ENCODE measurements at regions of chr2 and their contacts with region 1.

Region 1: DNA sequence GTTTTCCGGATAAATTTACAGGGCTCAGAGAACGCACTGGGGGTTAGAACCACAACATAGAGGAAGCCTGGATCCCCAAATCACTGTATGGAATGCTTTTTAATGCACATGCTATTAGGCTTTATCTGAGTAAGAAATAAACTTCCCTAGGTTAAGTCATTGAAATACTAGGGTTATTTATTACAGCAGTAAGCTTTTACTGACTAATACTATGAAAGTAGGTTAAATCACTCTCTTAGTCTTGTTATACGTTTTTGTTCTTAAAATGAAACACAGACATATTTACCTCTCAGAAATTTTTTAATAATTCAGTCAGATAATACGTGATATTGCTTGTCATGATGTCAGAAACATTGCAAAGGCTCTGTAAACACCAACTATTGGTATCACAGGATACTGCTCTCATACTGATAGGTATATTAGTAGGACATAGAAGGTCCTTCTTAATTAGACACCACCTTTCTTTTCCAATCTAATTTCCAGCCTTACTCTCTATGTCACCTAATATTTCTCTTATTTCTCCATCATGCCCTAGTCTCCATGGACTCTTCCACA is 162.7 kb upstream of the NYAP2 start:
- DNase-seq: no peak
- H3K4me3 ChIP-seq: no peak overlapping the region
- H3K27ac ChIP-seq: no peak overlapping the region
- H3K4me1 ChIP-seq: no peaks in the 10 kb centered on the region
- H3K27me3 ChIP-seq: no peaks in the 10 kb centered on the region
- CTCF ChIP-seq: no peak

Region 2: GRCh38 chr2:224909885-224910573 is 326.8 kb before region 1 on chr2:
- CTCF ChIA-PET with region 1: no interaction called
- POLR2A ChIA-PET with region 1: no interaction called
- intact Hi-C with region 1: no loop called
- DNase-seq: peak in 1 of 2 experiments; percentile 46
- H3K4me3 ChIP-seq: no peak overlapping the region
- H3K27ac ChIP-seq: no peak overlapping the region
- H3K4me1 ChIP-seq: no peaks in the 10 kb centered on the region
- H3K27me3 ChIP-seq: no peaks in the 10 kb centered on the region
- CTCF ChIP-seq: no peak

Region 3: DNA sequence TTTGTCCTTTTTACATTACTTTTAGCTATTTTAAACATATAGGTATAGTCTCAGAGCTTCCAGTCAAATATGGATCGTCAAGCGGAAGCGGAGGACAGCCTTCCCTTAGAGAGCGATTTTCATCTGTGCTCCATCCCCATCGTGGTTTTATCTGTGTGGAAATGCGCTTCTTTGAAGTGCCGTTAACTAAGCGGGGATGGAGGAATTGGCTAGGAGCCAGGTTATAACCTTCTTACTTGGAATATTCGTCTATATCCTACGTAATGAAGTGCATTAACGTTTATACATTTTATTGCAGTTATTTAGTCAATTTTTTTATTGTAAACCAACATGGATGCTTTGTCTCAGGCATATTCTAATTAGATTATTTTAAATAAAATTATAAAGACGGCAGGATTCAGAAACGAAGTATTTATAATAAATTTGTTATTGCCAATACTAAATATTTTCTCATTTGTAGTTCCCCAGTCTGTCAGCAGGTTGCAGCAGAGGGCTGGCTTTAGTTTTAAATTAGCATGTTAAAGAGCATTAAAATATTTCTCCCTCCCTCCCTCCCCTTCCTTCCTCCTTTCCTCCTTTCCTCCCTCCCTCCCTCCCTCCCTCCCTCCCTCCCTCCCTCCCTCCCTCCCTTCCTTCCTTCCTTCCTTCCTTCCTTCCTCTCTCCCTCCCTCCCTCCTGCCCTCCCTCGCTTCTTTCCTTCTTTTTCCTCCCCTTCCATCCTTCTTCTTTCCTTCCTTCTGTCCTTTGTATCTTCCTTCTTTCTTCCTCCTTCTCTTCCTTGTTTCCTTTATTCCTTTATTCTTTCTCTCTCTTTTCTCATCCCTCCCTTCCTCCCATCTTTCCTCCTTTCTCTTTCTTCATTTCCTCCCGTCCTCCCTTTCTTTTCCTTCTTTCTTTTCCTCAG is 114.0 kb before region 1 on chr2:
- CTCF ChIA-PET with region 1: no interaction called
- POLR2A ChIA-PET with region 1: no interaction called
- intact Hi-C with region 1: no loop called
- DNase-seq: peak in 1 of 2 experiments; percentile 24
- H3K4me3 ChIP-seq: no peak overlapping the region
- H3K27ac ChIP-seq: no peak overlapping the region
- H3K4me1 ChIP-seq: peaks cover 15% of the 10 kb centered on the region
- H3K27me3 ChIP-seq: no peaks in the 10 kb centered on the region
- CTCF ChIP-seq: peak; percentile 78

Region 4: DNA sequence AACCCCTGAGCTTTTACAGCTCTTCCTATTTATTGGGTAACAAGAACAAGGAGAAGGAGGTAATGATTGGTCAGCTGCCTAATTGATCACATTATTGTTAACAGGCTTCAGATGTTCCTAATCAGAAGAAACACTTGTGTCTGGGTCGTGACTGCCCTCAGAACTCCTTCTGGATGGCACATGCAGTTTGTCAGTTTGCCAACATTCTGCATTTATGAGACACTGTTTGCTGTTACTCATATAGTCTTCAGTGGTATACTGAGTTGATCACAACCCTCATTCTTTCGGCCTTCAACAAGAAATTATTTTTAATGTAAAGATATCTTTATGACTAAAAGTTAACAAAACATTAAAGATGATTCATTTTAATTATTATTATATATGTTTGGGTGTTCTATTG is 98.9 kb before region 1 on chr2:
- CTCF ChIA-PET with region 1: no interaction called
- POLR2A ChIA-PET with region 1: no interaction called
- intact Hi-C with region 1: no loop called
- DNase-seq: no peak
- H3K4me3 ChIP-seq: no peak overlapping the region
- H3K27ac ChIP-seq: no peak overlapping the region
- H3K4me1 ChIP-seq: no peaks in the 10 kb centered on the region
- H3K27me3 ChIP-seq: no peaks in the 10 kb centered on the region
- CTCF ChIP-seq: no peak

Region 5: DNA sequence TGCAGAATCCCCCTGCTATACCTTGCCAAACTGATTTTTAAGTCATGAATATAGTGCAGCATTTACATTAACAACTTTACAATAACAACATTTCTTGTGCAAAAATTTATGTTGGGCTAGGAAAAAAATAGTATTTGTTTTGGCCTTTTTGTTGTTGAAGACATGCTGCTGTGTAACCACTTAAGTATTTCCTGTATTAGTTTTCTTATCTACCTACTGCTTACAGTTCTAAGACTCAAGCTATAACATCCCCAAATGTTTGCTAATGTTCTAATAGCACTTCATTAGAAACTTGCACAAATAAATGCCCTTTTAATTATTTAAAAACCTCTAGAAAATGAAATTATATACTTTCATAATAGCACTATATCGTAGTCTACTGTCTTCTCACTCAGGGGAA is 40.3 kb before region 1 on chr2:
- CTCF ChIA-PET with region 1: no interaction called
- POLR2A ChIA-PET with region 1: interaction called, 36 read pairs
- intact Hi-C with region 1: no loop called
- DNase-seq: no peak
- H3K4me3 ChIP-seq: no peak overlapping the region
- H3K27ac ChIP-seq: no peak overlapping the region
- H3K4me1 ChIP-seq: no peaks in the 10 kb centered on the region
- H3K27me3 ChIP-seq: no peaks in the 10 kb centered on the region
- CTCF ChIP-seq: no peak